HepG2 (cell line): ENCODE measurements at regions of chr11 and their contacts with region 1.

Region 1: GRCh38 chr11:32121012-32121411 is 30.1 kb downstream of the RCN1 start:
- DNase-seq: no peak
- ATAC-seq: no peak
- H3K4me3 ChIP-seq: no peak overlapping the region
- H3K27ac ChIP-seq: no peak overlapping the region
- H3K4me1 ChIP-seq: peaks cover 12% of the 10 kb centered on the region
- H3K27me3 ChIP-seq: peaks cover 1 to 39% of the 10 kb centered on the region in 2 experiments; a peak in 3 of 5 replicates
- CTCF ChIP-seq: no peak
- EP300 ChIP-seq: no peak
- POLR2A ChIP-seq: no peak
- RAD21 ChIP-seq: no peak

Region 2: DNA sequence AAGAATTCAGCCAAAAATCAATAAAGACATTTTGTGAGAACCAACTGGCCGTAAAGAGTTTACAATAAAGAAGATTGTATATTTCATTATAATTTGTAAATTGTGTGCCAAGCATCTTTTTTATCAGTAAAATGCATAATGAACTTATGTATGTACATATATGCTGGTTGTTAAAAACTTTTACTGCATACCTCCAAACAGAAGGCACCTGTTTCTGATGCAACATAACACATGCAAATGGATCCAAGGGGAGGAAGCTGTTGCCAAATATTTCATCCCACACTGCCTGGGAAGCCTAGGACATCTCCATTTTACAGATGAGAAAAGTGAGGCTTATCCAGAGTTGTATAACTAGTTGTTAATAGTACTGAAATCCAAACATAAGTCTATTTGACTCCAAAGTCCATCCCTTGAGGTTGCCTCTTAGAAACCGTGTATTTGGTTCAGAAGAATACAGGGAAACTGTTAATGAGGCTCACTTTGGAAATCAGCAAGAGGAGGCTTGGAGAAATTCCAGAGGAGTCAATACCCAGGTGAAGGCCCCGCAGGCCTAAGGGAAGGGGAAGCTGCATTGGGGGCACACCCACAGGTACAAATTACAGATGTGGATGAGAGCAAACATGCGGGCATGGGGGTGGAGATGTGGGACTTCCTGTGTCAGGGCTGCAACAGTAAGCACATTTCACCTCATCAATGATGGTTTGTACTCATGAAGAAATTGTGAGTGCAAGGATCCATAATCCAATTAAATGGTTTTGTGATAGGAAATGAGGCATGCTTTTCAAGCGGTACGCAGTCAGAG is 20.9 kb after region 1 on chr11:
- CTCF ChIA-PET with region 1: no interaction called
- POLR2A ChIA-PET with region 1: no interaction called
- in situ Hi-C with region 1: no loop called
- intact Hi-C with region 1: loop called (anchors 2 kb)
- DNase-seq: peak; percentile 17
- ATAC-seq: peak; percentile 44
- H3K4me3 ChIP-seq: no peak overlapping the region
- H3K27ac ChIP-seq: no peak overlapping the region
- H3K4me1 ChIP-seq: peaks cover 10% of the 10 kb centered on the region
- H3K27me3 ChIP-seq: no peaks in the 10 kb centered on the region; a peak in 2 of 5 replicates
- CTCF ChIP-seq: no peak
- EP300 ChIP-seq: no peak
- POLR2A ChIP-seq: no peak
- RAD21 ChIP-seq: no peak